ENCODE measurements at regions of chr17 and their contacts with region 1.

Region 1: GRCh38 chr17:62968445-62968923 is 2.4 kb downstream of the TANC2 start:
- DNase-seq: peak; percentile 93 to 98
- ATAC-seq: peak; percentile 65 to 87
- H3K4me3 ChIP-seq: peak overlapping the region; percentile 98
- H3K27ac ChIP-seq: peak overlapping the region; percentile 65 to 98
- H3K4me1 ChIP-seq: peaks cover 56% of the 10 kb centered on the region
- CTCF ChIP-seq: peak; percentile 100
- EP300 ChIP-seq: no peak
- POLR2A ChIP-seq: no peak
- RAD21 ChIP-seq: peak; percentile 98 to 99

Region 2: DNA sequence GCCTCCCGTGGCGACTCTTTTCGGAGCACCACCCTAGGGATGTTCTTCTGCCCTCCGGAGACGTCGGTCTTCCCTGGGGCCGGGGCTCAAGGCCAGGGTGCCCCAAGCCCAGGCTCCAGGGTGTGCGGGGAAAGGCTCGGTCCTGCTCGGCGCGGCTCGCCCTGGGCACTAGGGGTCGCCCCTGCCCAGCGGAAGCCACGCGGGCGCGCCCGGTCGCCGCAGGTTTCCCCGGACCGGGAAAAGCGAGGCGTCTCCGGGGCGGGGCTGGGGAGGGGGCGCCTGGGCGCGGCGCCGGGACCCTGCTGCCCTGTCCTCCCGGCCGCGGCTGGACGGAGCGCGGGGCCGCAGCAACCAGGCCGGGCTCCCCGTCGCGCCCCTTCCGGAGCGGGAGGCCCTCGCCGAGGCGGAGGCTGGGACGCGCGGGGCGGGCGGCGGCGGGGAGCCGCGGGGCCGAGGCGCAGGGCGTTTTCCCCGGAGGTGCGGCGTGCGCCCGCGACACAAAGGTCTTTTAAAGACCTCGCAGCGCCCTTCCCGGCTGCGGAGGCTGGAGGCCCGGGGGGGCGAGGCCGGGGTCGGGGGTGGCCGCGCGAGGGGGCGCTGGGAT is 264.6 kb before region 1 on chr17:
- CTCF ChIA-PET with region 1: interaction called, 39 read pairs
- POLR2A ChIA-PET with region 1: interaction called, 4 read pairs
- DNase-seq: peak; percentile 64 to 74
- ATAC-seq: peak; percentile 86 to 93
- H3K4me3 ChIP-seq: peak overlapping the region; percentile 70
- H3K27ac ChIP-seq: peak overlapping the region; percentile 96 to 97
- H3K4me1 ChIP-seq: peaks cover 21% of the 10 kb centered on the region
- CTCF ChIP-seq: peak; percentile 99
- EP300 ChIP-seq: no peak; a peak in 1 of 5 replicates
- POLR2A ChIP-seq: no peak
- RAD21 ChIP-seq: peak; percentile 94 to 100

Measured in A549 (cell line).